MCF 10A (cell line): ENCODE measurements at regions of chr19 and their contacts with region 1.

Region 1: GRCh38 chr19:45038931-45039893 is at the start of gene CLASRP:
- DNase-seq: peak; percentile 91
- H3K4me3 Mint-ChIP-seq: peak within 1 kb of the TSS; percentile 95
- H3K27ac Mint-ChIP-seq: peak within 1 kb of the TSS; percentile 99
- H3K4me1 Mint-ChIP-seq: peaks cover 22% of the 10 kb centered on the region
- H3K27me3 Mint-ChIP-seq: no peaks in the 10 kb centered on the region
- CTCF ChIP-seq: no peak
- total RNA-seq, gene CLASRP: 71.7 and 83.5 TPM in 2 replicates

Region 2: GRCh38 chr19:43619262-43620060 is 1419.8 kb before region 1 on chr19 and contains the start of gene ZNF428:
- CTCF ChIA-PET with region 1: no interaction called
- POLR2A ChIA-PET with region 1: no interaction called
- intact Hi-C with region 1: no loop called
- DNase-seq: peak; percentile 85
- H3K4me3 Mint-ChIP-seq: peak within 1 kb of the TSS; percentile 89
- H3K27ac Mint-ChIP-seq: peak within 1 kb of the TSS; percentile 78
- H3K4me1 Mint-ChIP-seq: peaks cover 10% of the 10 kb centered on the region
- H3K27me3 Mint-ChIP-seq: no peaks in the 10 kb centered on the region
- CTCF ChIP-seq: no peak
- total RNA-seq, gene ZNF428: 18.6 and 23.3 TPM in 2 replicates

Region 3: DNA sequence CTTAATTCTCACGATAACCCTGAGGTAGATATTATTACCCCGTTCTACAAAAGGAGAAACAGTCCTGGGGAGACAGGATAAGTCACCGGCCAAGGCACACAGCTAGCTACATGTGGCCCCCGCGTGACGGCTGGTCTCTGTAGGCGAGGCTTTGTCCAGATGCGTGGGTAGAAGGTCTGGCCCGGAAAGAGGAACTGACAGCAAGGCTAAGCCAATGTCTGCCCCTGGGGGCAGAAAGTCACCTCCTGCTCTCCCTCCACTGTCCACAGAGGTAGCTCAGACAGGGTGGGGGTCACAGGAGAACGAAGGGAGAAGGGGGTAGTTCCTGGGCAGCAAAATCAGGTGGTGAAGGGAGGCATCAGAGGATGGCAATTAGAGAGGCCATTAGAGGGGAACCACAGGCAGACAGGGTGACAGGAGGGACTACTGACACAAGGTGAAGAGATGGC is 95.4 kb before region 1 on chr19:
- CTCF ChIA-PET with region 1: no interaction called
- POLR2A ChIA-PET with region 1: no interaction called
- intact Hi-C with region 1: no loop called
- DNase-seq: peak; percentile 51
- H3K4me3 Mint-ChIP-seq: no peak overlapping the region
- H3K27ac Mint-ChIP-seq: no peak overlapping the region
- H3K4me1 Mint-ChIP-seq: peaks cover 11% of the 10 kb centered on the region
- H3K27me3 Mint-ChIP-seq: no peaks in the 10 kb centered on the region
- CTCF ChIP-seq: no peak

Region 4: GRCh38 chr19:45001087-45001739 is 38.0 kb before region 1 on chr19 and contains the start of gene RELB:
- CTCF ChIA-PET with region 1: no interaction called
- POLR2A ChIA-PET with region 1: interaction called, 22 read pairs
- intact Hi-C with region 1: no loop called
- DNase-seq: peak; percentile 95
- H3K4me3 Mint-ChIP-seq: peak within 1 kb of the TSS; percentile 86
- H3K27ac Mint-ChIP-seq: peak within 1 kb of the TSS; percentile 94
- H3K4me1 Mint-ChIP-seq: peaks cover 8% of the 10 kb centered on the region
- H3K27me3 Mint-ChIP-seq: no peaks in the 10 kb centered on the region
- CTCF ChIP-seq: no peak
- total RNA-seq, gene RELB: 27.0 and 39.8 TPM in 2 replicates

Region 5: GRCh38 chr19:45027371-45027770 is 11.8 kb before region 1 on chr19:
- CTCF ChIA-PET with region 1: interaction called, 3 read pairs
- POLR2A ChIA-PET with region 1: interaction called, 27 read pairs
- intact Hi-C with region 1: no loop called
- DNase-seq: no peak
- H3K4me3 Mint-ChIP-seq: no peak overlapping the region
- H3K27ac Mint-ChIP-seq: no peak overlapping the region
- H3K4me1 Mint-ChIP-seq: no peaks in the 10 kb centered on the region
- H3K27me3 Mint-ChIP-seq: no peaks in the 10 kb centered on the region
- CTCF ChIP-seq: no peak

Region 6: DNA sequence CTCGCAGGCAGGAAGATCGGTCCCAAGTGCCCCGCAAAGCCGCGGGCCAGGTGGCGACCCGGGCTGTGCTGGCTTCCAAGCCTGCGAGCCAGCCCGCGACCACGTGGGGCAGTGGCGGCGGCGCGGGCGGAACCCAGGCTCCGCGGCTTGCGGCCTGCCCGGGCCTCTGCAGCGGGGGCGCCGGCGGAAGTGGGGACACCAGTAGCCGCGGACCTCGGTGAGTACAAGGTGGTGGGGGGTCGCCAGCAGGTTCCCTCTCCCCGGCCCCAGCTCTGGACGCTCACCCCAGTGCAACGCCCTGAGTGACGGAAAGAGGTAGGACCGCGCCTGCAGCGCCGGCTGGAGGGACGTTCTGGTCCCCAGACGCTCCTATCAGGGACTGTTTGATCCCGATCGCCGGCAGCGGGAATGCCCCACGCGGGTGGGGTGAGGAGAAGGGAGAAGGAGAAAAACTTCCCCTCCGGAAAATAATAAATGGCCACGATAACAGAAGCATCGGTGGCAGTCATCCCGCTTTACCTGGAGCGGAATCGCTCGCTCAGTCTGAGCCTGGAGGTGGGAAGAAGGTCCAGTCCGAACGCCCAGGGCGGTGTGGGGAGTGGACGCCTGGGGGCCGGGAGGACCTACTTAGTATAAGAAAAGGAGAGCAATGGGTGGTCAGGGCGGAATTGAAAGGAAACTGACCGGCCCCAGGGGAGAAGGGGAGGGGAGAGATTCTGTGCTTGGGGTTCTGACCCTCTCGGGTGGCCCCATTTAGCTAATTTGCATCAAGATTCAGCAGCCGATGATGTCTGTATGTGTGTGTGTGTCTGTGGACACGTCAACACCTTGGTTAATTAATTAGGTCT is 40.1 kb after region 1 on chr19 and contains the start of gene GEMIN7:
- CTCF ChIA-PET with region 1: interaction called, 4 read pairs
- POLR2A ChIA-PET with region 1: interaction called, 19 read pairs
- intact Hi-C with region 1: no loop called
- DNase-seq: peak; percentile 74
- H3K4me3 Mint-ChIP-seq: peak within 1 kb of the TSS; percentile 99
- H3K27ac Mint-ChIP-seq: peak within 1 kb of the TSS; percentile 94
- H3K4me1 Mint-ChIP-seq: peaks cover 22% of the 10 kb centered on the region
- H3K27me3 Mint-ChIP-seq: no peaks in the 10 kb centered on the region
- CTCF ChIP-seq: no peak
- total RNA-seq, gene GEMIN7: 21.0 and 21.8 TPM in 2 replicates